Caco-2 (cell line): ENCODE measurements at regions of chr16 and their contacts with region 1.

Region 1: GRCh38 chr16:69565671-69566239 is at the start of gene NFAT5:
- DNase-seq: peak; percentile 96 to 98
- H3K4me3 ChIP-seq: peak within 1 kb of the TSS; percentile 89
- H3K4me3 Mint-ChIP-seq: peak within 1 kb of the TSS; percentile 98
- H3K27ac Mint-ChIP-seq: peak within 1 kb of the TSS; percentile 96
- H3K4me1 ChIP-seq: peaks cover 38% of the 10 kb centered on the region
- H3K4me1 Mint-ChIP-seq: peaks cover 24% of the 10 kb centered on the region
- H3K27me3 ChIP-seq: no peaks in the 10 kb centered on the region
- H3K27me3 Mint-ChIP-seq: no peaks in the 10 kb centered on the region
- CTCF ChIP-seq: peak in 1 of 2 experiments; percentile 43
- total RNA-seq, gene NFAT5: 87.6 and 89.8 TPM in 2 replicates

Region 2: DNA sequence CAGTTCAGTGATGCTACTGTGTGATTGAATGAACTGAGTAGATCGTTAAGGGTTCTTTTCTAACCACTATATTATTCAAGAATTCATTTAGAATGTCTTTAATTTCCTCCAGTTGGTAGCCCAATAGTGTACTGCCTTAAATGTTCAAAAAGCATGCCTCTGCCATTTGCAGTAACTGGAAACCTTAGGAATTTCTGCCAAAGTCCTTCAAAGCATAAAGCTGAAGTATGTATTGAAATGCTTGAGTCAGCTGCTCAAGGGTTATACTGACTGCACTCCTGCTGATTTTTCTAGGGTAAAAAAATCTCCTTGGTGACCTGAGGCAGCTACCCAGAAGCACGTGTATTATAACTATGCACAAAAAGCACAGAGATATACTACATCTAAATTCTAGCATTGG is 322.3 kb before region 1 on chr16:
- CTCF ChIA-PET with region 1: no interaction called
- POLR2A ChIA-PET with region 1: no interaction called
- intact Hi-C with region 1: no loop called
- DNase-seq: no peak
- H3K4me3 ChIP-seq: no peak overlapping the region
- H3K4me3 Mint-ChIP-seq: no peak overlapping the region
- H3K27ac Mint-ChIP-seq: no peak overlapping the region
- H3K4me1 ChIP-seq: no peaks in the 10 kb centered on the region
- H3K4me1 Mint-ChIP-seq: no peaks in the 10 kb centered on the region
- H3K27me3 ChIP-seq: no peaks in the 10 kb centered on the region
- H3K27me3 Mint-ChIP-seq: no peaks in the 10 kb centered on the region
- CTCF ChIP-seq: no peak

Region 3: GRCh38 chr16:69260019-69260418 is 305.7 kb before region 1 on chr16:
- CTCF ChIA-PET with region 1: no interaction called
- POLR2A ChIA-PET with region 1: no interaction called
- intact Hi-C with region 1: no loop called
- DNase-seq: no peak
- H3K4me3 ChIP-seq: no peak overlapping the region
- H3K4me3 Mint-ChIP-seq: no peak overlapping the region
- H3K27ac Mint-ChIP-seq: no peak overlapping the region
- H3K4me1 ChIP-seq: no peaks in the 10 kb centered on the region
- H3K4me1 Mint-ChIP-seq: no peaks in the 10 kb centered on the region
- H3K27me3 ChIP-seq: no peaks in the 10 kb centered on the region
- H3K27me3 Mint-ChIP-seq: no peaks in the 10 kb centered on the region
- CTCF ChIP-seq: no peak

Region 4: GRCh38 chr16:69339289-69340108 is 226.3 kb before region 1 on chr16 and contains the starts of genes COG8 and NIP7:
- CTCF ChIA-PET with region 1: no interaction called
- POLR2A ChIA-PET with region 1: no interaction called
- intact Hi-C with region 1: loop called (anchors 10 kb)
- DNase-seq: peak; percentile 98 to 99
- H3K4me3 ChIP-seq: peak within 1 kb of the TSS; percentile 81
- H3K4me3 Mint-ChIP-seq: peak within 1 kb of the TSS; percentile 98
- H3K27ac Mint-ChIP-seq: peak within 1 kb of the TSS; percentile 98
- H3K4me1 ChIP-seq: peaks cover 14% of the 10 kb centered on the region; the same call in 1 of the 2 replicates
- H3K4me1 Mint-ChIP-seq: peaks cover 12% of the 10 kb centered on the region
- H3K27me3 ChIP-seq: no peaks in the 10 kb centered on the region
- H3K27me3 Mint-ChIP-seq: no peaks in the 10 kb centered on the region
- CTCF ChIP-seq: peak; percentile 85 to 93
- total RNA-seq, gene COG8: 57.4 and 59.1 TPM in 2 replicates
- total RNA-seq, gene NIP7: 65.6 TPM in 2 replicates

Region 5: DNA sequence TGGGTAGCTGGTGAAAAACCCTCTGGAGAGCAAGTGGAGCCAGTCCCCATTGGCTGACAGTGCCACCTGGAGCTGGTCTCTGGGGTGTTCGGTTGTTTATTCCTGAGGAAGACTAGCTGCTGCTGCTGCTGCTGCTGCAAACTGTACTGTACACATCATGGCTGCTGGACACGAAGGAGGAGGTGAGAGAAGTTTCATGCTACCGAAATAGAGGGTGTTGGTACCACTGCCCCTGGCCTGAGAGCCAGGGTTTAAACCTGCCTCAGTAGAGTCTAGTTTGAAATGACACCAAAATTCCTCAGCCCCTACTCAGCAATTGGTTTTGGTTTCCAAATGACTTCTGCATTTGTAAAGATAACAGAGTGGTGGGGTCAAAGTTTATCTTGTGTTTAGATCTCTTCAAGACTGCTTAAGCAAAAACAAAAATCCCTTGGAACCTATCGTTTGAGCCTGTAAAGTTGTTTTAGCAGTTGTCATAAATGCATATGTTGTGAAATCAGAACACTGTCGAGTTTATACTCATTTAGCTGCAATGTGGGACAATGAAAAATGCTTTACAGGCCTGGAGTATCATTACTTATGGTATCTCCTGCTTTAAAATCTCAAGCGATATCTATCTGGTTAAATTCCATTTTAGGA is 100.6 kb before region 1 on chr16:
- CTCF ChIA-PET with region 1: interaction called, 4 read pairs
- POLR2A ChIA-PET with region 1: no interaction called
- intact Hi-C with region 1: loop called (anchors 2 kb)
- DNase-seq: peak; percentile 60 to 71
- H3K4me3 ChIP-seq: no peak overlapping the region
- H3K4me3 Mint-ChIP-seq: peak overlapping the region; percentile 57
- H3K27ac Mint-ChIP-seq: peak overlapping the region; percentile 76
- H3K4me1 ChIP-seq: peaks cover 50% of the 10 kb centered on the region
- H3K4me1 Mint-ChIP-seq: peaks cover 51% of the 10 kb centered on the region
- H3K27me3 ChIP-seq: no peaks in the 10 kb centered on the region
- H3K27me3 Mint-ChIP-seq: no peaks in the 10 kb centered on the region
- CTCF ChIP-seq: peak in 1 of 2 experiments; percentile 31

Region 6: DNA sequence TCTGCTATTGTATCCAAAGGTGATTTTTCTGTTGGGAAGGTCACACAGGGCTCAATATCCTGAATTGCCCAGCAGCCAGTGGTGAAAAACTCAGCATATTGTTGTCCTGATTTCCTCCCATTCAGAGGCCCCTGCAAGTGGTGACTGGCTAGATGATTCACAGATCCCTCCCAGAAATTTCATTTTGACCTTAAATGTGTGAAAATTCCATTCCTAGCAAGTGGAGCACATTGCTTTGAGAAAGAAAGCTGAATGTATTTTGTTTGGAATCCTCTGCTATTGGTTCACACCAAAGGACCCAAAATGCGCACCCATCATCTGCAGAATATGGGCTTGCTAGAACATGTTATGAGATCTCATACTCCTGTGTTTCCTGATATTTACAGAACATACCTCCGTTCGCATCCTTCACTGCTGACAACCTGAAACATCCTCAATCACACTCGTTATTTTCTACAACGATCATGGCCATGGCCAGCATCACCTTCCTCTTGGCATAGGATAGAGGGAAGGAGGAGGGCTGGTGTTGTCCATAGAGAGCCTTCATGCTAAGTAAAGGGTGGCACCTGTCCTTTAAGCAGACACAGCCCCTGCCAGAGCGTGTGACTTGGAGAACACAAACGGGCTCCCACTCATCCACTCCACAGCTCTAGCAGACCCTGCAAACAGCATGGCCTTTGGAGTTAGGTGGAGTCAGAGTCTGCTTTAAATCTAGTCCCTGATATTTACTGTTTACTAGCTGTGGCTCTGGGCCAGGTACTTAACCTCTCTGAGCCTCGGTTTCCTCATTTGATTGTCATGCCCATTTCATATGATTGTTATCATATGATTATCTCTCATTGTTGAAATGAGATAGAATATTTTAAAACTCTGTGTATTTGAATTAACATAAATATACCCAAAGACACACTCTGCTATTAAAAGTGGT is 30.4 kb before region 1 on chr16:
- CTCF ChIA-PET with region 1: interaction called, 4 read pairs
- POLR2A ChIA-PET with region 1: interaction called, 4 read pairs
- intact Hi-C with region 1: loop called (anchors 2 kb)
- DNase-seq: no peak
- H3K4me3 ChIP-seq: no peak overlapping the region
- H3K4me3 Mint-ChIP-seq: no peak overlapping the region
- H3K27ac Mint-ChIP-seq: no peak overlapping the region
- H3K4me1 ChIP-seq: peaks cover 8% of the 10 kb centered on the region
- H3K4me1 Mint-ChIP-seq: peaks cover 21% of the 10 kb centered on the region
- H3K27me3 ChIP-seq: no peaks in the 10 kb centered on the region
- H3K27me3 Mint-ChIP-seq: no peaks in the 10 kb centered on the region
- CTCF ChIP-seq: no peak

Region 7: GRCh38 chr16:69613378-69614154 is 47.8 kb after region 1 on chr16:
- CTCF ChIA-PET with region 1: no interaction called
- POLR2A ChIA-PET with region 1: no interaction called
- intact Hi-C with region 1: loop called (anchors 2 kb)
- DNase-seq: peak in 1 of 2 experiments; percentile 40
- H3K4me3 ChIP-seq: no peak overlapping the region
- H3K4me3 Mint-ChIP-seq: peak overlapping the region; percentile 3
- H3K27ac Mint-ChIP-seq: peak overlapping the region; percentile 6
- H3K4me1 ChIP-seq: peaks cover 61% of the 10 kb centered on the region
- H3K4me1 Mint-ChIP-seq: peaks cover 54% of the 10 kb centered on the region
- H3K27me3 ChIP-seq: no peaks in the 10 kb centered on the region
- H3K27me3 Mint-ChIP-seq: no peaks in the 10 kb centered on the region
- CTCF ChIP-seq: no peak